Cardiac septum (tissue), 1 donor: ENCODE measurements at regions of chr2 and their contacts with region 1.

Region 1: DNA sequence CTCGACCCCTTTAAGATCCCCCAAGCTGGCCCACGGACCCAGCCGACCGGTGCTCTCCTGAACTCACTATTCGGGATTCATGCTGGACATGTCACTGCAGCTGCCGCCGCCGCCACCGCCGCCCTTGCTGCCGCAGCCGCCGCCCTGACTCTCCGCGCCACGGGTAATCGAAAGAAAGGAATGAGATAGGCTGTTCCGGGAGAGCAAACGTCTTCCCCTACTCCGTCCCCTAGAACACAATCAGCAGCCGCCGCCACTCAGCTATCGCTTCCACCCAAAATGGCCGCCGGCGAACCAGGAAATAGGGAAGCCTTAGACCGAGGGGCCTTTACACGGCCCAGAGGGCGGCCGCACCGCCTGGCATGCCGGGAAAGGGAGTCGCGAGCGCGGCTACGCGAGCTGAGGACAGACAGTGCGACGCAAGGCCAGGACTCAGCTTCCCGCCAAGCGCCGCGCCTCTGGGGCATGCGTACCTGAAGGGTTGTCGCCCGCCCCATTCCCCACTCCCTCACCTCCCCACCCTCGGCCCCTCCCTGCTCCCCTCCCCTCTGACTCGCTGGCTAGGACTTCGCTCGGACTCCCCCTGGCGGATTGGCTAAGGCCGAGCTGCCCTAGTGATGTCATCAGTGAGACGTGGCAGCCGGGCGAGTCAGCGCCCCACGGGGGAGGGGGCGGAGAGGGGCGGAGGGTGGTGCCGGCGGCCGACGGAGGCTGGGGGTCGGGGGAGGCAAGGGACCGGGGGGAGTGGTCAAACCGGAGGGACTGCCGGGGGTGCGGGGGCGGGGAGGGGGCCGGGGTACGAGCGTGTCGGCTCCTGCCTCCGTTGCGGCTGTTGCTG is at the start of gene RAB1A:
- DNase-seq: peak; percentile 100
- total RNA-seq, gene RAB1A: 106 TPM

Region 2: GRCh38 chr2:64988420-64989125 is 141.5 kb before region 1 on chr2:
- intact Hi-C with region 1: loop called (anchors 5 kb)
- DNase-seq: peak; percentile 89

Region 3: DNA sequence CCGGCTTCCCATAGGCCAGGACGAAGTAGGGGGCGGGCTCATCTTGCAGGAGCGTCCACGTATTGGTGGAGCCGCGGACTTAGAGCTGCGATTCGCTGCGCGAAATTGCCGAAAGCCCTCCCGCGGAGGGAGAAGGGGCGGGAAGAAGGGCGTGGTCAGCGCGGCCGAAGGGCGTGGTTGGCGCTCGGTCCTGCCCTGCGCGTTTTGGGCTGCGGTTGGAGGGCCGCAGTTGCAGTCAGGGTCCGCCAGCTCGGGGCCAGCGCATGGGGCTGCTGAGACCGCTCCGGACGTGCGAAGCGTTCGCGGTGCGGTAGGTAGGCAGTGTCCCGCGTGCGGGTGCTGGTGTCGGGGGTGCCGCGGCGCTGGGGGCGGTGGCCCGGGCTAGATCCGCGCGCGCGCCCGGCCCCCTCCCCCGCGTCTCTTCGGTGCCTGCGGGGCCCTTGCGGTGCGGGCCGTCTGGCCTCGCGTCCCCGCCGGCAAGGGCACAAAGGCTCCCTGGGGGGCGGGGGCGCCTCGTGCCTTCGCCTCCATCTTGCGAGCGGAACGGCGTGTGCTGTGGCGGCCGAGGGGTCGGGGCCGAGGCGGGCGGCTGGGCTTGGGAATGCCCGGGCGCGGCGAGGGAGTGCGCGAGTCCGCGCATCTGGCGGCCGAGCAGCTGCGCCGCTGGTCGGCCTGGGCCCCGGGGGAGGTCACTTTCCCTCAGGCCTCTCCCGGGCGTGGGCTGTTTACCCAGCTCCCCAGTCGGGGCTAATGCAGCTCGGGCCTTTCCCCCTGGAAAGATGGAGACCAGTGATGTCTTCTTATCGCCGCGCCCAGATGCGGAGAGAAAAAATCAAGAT is 73.6 kb before region 1 on chr2 and contains the start of gene CEP68:
- intact Hi-C with region 1: loop called (anchors 5 kb)
- DNase-seq: peak; percentile 99
- total RNA-seq, gene CEP68: 21.6 TPM